ENCODE measurements at regions of chr20 and their contacts with region 1.

Region 1: GRCh38 chr20:14142171-14142570 is 146.9 kb downstream of the MACROD2 start:
- DNase-seq: peak; percentile 47
- ATAC-seq: peak; percentile 98
- H3K4me3 ChIP-seq: no peak overlapping the region
- H3K27ac ChIP-seq: no peak overlapping the region
- H3K4me1 ChIP-seq: no peaks in the 10 kb centered on the region
- H3K27me3 ChIP-seq: no peaks in the 10 kb centered on the region
- CTCF ChIP-seq: peak; percentile 82
- EP300 ChIP-seq: no peak
- POLR2A ChIP-seq: no peak
- RAD21 ChIP-seq: peak; percentile 62

Region 2: DNA sequence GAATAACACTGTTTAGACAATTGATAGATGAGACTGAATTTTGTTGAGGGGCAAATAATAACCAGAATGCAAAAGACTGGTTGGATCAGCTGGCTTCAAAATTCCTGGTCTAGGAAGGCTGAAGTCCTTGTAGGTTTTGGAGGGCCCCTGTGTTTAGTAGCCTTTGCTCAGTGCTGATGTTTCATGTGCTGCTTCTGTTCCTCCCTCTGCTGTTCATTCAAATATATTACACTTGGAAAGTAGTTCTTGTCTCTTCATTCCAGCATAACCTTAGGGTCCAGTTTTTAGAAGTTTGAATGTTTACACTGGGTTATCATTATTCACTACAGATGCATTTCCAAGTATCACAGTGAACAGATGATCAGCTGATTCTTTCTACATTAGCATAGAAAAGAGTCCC is 122.7 kb after region 1 on chr20:
- CTCF ChIA-PET with region 1: no interaction called
- POLR2A ChIA-PET with region 1: no interaction called
- in situ Hi-C with region 1: no loop called
- intact Hi-C with region 1: loop called (anchors 1 kb)
- DNase-seq: peak; percentile 22
- ATAC-seq: peak; percentile 82
- H3K4me3 ChIP-seq: no peak overlapping the region
- H3K27ac ChIP-seq: no peak overlapping the region
- H3K4me1 ChIP-seq: no peaks in the 10 kb centered on the region
- H3K27me3 ChIP-seq: no peaks in the 10 kb centered on the region
- CTCF ChIP-seq: peak; percentile 22
- EP300 ChIP-seq: no peak
- POLR2A ChIP-seq: no peak
- RAD21 ChIP-seq: no peak

Region 3: GRCh38 chr20:15930311-15931305 is 1788.4 kb after region 1 on chr20:
- CTCF ChIA-PET with region 1: no interaction called
- POLR2A ChIA-PET with region 1: no interaction called
- in situ Hi-C with region 1: no loop called
- intact Hi-C with region 1: loop called (anchors 1 kb)
- DNase-seq: peak; percentile 28
- ATAC-seq: peak; percentile 80
- H3K4me3 ChIP-seq: no peak overlapping the region
- H3K27ac ChIP-seq: no peak overlapping the region
- H3K4me1 ChIP-seq: no peaks in the 10 kb centered on the region
- H3K27me3 ChIP-seq: no peaks in the 10 kb centered on the region
- CTCF ChIP-seq: peak; percentile 42
- EP300 ChIP-seq: no peak
- POLR2A ChIP-seq: no peak
- RAD21 ChIP-seq: no peak